ENCODE measurements at regions of chr7 and their contacts with region 1.

Region 1: GRCh38 chr7:127392566-127393367 is at the start of gene ZNF800:
- DNase-seq: peak; percentile 77 to 94 (median 91)
- H3K4me3 ChIP-seq: peak within 1 kb of the TSS; percentile 61 to 100 (median 96)
- H3K27ac ChIP-seq: peak within 1 kb of the TSS; percentile 42 to 97 (median 93)
- H3K27me3 ChIP-seq: no peaks in the 10 kb centered on the region
- CTCF ChIP-seq: peak in 14 of 56 donors; percentile 4 to 34 (median 14)
- total RNA-seq, gene ZNF800: 34.6 to 62.9 (median 48.6) TPM

Region 2: DNA sequence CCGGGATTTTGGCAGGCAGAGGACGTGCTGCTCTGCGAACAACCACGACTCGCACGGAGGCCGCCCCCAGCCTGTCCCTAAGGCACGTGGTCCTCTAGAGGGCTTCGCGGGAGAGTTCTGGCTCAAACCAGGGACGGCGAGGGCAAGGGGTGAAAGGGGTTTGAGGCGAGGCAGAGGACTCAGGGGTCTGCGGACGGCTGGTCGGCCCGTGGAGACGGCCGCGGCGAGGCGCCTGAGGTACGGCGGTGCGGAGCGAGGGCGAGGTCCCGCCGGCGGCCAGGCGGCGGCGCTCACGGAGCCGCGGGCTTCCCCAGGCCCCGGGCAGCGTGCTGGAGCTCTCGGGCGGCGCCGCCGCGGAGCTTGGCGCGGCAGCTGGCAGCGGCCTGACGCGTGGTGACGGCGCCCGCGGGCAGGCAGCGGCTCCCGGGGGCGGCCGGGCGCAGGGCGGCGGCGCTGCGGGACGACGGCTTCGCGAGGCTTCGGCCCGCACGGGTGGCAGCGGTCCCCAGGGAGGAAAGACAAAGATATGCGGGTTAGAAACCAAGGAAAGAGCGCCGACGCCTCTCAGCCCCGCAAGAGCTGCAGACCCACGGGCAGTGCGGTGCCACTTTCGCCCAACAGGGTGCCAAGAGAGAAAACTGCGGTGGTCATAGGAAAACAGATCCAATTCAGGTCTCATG is 45.1 kb before region 1 on chr7:
- intact Hi-C with region 1: loop called in 1 of 2 experiments (anchors 5 kb)
- DNase-seq: peak; percentile 11 to 65 (median 36)
- H3K4me3 ChIP-seq: peak overlapping the region in 54 of 59 donors; percentile 9 to 61 (median 44)
- H3K27ac ChIP-seq: no peak overlapping the region
- H3K27me3 ChIP-seq: no peaks in the 10 kb centered on the region
- CTCF ChIP-seq: peak in 47 of 56 donors; percentile 4 to 67 (median 40)

Region 3: DNA sequence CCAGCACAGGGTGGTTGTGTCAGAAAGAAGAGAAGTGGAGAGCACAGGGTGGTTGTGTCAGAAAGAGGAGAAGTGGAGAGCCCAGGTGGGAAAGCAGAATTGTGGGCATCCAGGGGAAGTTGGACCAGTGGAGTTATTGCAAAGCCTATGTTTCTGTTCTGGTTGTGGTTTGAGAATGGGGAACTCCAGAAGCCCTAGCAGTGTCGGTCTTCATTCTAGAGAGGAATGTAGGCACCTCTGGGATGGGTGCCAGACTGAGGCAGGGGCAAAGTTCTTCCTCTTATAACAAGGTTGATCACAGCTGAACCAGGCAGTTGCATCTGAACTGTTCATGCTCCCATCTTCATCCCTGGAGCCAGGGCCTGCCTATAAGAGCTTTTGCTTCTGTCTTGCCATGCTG is 201.7 kb after region 1 on chr7:
- intact Hi-C with region 1: loop called (anchors 5 to 10 kb)
- DNase-seq: peak in 1 of 10 donors; percentile 30
- H3K4me3 ChIP-seq: no peak overlapping the region
- H3K27ac ChIP-seq: no peak overlapping the region
- H3K27me3 ChIP-seq: no peaks in the 10 kb centered on the region
- CTCF ChIP-seq: no peak

Measured in dorsolateral prefrontal cortex (tissue), 120 donors.